ENCODE measurements at regions of chr10 and their contacts with region 1.

Region 1: GRCh38 chr10:7258948-7259523 is 151.8 kb downstream of the SFMBT2 start:
- DNase-seq: no peak
- ATAC-seq: no peak
- H3K4me3 ChIP-seq: no peak overlapping the region
- H3K27ac ChIP-seq: no peak overlapping the region
- H3K4me1 ChIP-seq: no peaks in the 10 kb centered on the region
- H3K27me3 ChIP-seq: no peaks in the 10 kb centered on the region
- CTCF ChIP-seq: no peak
- POLR2A ChIP-seq: no peak

Region 2: DNA sequence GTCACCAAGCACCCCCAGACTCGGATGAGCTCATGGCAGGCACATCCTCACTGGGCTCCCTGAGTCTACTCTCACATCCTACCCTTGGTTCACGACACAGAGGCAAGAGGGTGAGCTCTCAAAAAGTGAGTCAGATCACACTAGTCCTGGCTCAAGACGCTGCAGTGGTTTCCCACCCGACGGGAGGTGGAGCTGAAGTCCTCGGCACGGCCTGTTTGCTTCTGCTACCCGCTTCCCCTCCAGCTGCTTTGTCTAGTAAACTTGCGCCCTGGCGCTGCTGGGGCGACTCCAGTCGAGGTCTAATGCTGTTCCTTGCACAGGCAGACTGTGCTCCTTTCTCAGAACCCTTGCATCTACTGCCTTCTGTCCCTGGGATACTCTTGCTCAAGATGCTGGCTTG is 165.3 kb after region 1 on chr10:
- intact Hi-C with region 1: loop called in 1 of 2 experiments (anchors 10 kb)
- DNase-seq: no peak
- ATAC-seq: peak in 2 of 4 donors; percentile 34 to 37
- H3K4me3 ChIP-seq: no peak overlapping the region
- H3K27ac ChIP-seq: no peak overlapping the region
- H3K4me1 ChIP-seq: no peaks in the 10 kb centered on the region
- H3K27me3 ChIP-seq: peaks cover 0 to 4% of the 10 kb centered on the region in 2 donors
- CTCF ChIP-seq: no peak
- POLR2A ChIP-seq: no peak

Measured in right lobe of liver (tissue), 6 donors.